Calu3 (cell line): ENCODE measurements at regions of chr5 and their contacts with region 1.

Region 1: GRCh38 chr5:149561848-149562247 is 10.6 kb upstream of the CSNK1A1 start:
- DNase-seq: peak; percentile 37
- H3K4me3 Mint-ChIP-seq: peak overlapping the region; percentile 63
- H3K27ac Mint-ChIP-seq: peak overlapping the region; percentile 87
- H3K4me1 Mint-ChIP-seq: peaks cover 36% of the 10 kb centered on the region
- H3K27me3 Mint-ChIP-seq: no peaks in the 10 kb centered on the region
- CTCF ChIP-seq: no peak

Region 2: DNA sequence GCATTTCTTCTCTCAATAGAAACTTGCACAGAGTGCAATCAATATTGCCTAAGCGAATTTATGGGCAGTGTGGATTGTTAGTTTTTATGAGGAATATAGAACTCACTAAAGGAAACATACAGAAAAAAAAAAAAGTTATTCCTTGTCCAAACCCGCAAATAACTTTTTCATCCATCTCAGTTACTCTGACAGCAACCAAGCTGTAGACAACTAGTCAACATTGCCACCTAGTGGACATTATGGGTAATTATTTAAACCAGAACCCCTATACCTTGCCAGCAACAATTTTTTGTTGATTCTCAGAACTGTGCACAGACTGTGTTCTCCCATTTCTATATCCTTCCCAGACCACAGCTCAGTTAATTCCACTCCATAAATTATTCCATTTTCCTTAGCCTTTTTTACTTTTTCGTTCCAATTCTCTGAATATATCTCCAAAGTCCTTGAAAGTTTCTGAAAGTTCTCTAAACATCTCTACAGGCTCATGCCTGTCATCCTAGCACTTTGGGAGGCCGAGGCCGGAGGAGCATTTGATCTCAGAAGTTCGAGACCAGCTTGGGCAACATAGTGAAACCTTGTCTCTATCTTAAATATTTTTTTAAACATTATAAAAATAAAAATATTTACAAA is 292.8 kb before region 1 on chr5:
- CTCF ChIA-PET with region 1: no interaction called
- intact Hi-C with region 1: loop called (anchors 10 kb)
- DNase-seq: peak; percentile 18
- H3K4me3 Mint-ChIP-seq: no peak overlapping the region
- H3K27ac Mint-ChIP-seq: no peak overlapping the region
- H3K4me1 Mint-ChIP-seq: peaks cover 28% of the 10 kb centered on the region
- H3K27me3 Mint-ChIP-seq: no peaks in the 10 kb centered on the region
- CTCF ChIP-seq: peak; percentile 72

Region 3: DNA sequence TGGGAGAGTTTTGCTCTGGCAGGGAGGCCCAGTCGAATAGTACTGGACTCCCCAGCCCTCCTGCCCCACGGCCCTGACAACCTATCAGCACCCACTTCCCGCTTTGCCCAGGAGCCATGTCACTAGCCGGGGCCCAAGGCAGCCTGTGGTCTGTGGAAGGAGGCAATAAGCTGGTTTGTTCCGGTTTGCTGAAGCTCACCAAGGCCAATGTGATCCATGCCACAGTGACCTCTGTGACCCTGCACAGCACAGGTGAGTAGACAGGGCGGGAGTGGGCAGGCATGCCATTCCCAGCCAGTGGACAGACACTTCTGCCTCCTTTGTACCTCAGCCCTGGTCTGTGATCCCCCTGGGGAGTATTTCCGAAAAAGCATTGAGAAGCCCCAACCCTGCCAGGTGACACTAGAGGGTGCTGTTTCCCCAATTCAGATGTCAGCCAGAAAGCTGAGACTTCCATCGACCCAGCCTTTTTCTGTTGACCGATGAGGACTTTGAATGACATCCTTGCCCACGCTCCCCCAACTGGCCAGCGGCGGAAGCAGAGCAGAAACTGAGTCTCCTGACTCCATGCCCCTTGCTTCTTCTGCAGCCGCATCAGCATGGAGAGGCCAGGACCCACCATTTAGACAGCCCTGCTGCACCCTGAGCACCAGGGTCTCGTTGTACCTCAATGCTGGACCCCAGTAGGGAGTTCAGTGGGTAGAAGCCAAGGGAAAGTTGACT is 194.4 kb before region 1 on chr5:
- CTCF ChIA-PET with region 1: interaction called, 9 read pairs
- intact Hi-C with region 1: loop called (anchors 1 kb)
- DNase-seq: peak; percentile 89
- H3K4me3 Mint-ChIP-seq: no peak overlapping the region
- H3K27ac Mint-ChIP-seq: no peak overlapping the region
- H3K4me1 Mint-ChIP-seq: peaks cover 8% of the 10 kb centered on the region
- H3K27me3 Mint-ChIP-seq: no peaks in the 10 kb centered on the region
- CTCF ChIP-seq: peak; percentile 90

Region 4: DNA sequence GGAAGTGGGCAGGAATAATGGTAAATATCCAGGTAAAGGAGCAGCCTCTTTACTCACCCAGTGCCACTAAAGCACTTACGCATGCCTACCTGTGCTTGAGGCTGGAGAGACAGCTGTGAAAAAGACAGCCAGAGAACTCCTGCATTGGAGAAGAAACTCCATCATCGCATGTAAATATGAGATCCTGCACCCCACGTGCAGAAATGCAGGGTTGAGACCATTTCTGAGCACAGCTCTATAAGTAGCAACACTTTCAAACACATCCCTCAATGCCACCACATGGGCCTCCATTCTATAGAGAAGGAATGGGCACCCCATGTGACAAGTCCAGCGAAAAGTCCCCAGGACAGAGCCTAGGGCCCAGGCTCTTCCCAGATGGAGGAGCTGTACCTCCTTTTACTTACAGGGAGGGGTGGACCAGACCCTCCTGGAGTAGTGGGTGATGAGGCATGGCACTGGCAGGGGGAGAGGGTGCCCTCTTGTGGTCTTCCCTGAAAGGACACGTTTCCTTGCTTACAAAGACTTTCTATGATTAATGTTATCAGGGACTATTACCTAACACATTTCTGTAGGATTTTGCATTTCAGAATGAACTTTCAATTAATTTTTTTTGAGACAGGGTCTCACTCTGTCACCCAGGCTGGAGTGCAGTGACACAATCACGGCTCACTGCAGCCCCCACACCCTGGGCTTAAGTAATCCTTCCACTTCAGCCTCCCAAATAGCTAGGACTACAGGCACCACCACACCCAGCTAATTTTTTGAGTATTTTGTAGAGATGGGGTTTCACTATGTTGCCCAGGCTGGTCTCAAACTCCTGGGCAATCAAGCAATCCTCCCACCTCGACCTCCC is 127.5 kb before region 1 on chr5:
- CTCF ChIA-PET with region 1: interaction called, 11 read pairs
- intact Hi-C with region 1: no loop called
- DNase-seq: peak; percentile 77
- H3K4me3 Mint-ChIP-seq: no peak overlapping the region
- H3K27ac Mint-ChIP-seq: no peak overlapping the region
- H3K4me1 Mint-ChIP-seq: peaks cover 27% of the 10 kb centered on the region
- H3K27me3 Mint-ChIP-seq: no peaks in the 10 kb centered on the region
- CTCF ChIP-seq: peak; percentile 93

Region 5: DNA sequence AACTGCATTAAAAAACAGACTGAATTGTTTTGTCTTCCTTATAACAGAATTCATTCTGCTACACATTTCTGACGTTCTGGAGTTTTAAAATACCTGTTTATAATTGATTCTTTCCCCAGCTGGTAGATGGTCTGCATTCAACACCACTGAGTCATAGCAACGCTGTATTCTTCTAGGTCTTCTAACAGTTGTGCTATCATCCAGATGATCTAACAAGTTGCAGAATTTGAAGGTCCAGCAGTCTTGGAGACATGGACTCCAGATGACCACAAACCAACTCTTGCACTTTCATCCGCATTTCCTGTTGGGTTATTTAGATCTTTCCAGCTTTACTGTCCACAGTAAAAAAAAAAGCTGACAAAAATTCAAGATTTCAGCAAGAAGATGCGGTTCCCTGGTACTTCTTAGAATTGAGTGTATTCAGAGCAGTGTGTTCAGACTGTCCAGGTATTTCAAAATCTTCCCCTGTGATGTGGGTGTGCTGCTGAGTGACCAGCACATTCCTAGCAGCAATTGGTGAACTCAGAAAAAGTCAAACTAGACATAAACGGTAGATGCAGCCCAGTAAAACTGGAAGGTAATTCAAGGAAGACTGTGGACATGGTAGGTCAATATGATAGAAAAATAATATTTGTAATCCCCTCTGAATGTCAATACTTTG is 60.8 kb before region 1 on chr5:
- CTCF ChIA-PET with region 1: no interaction called
- intact Hi-C with region 1: no loop called
- DNase-seq: no peak
- H3K4me3 Mint-ChIP-seq: no peak overlapping the region
- H3K27ac Mint-ChIP-seq: no peak overlapping the region
- H3K4me1 Mint-ChIP-seq: peaks cover 9% of the 10 kb centered on the region
- H3K27me3 Mint-ChIP-seq: no peaks in the 10 kb centered on the region
- CTCF ChIP-seq: no peak

Region 6: GRCh38 chr5:149618581-149619251 is 56.9 kb after region 1 on chr5:
- CTCF ChIA-PET with region 1: interaction called, 6 read pairs
- intact Hi-C with region 1: loop called (anchors 5 kb)
- DNase-seq: peak; percentile 67
- H3K4me3 Mint-ChIP-seq: no peak overlapping the region
- H3K27ac Mint-ChIP-seq: peak overlapping the region; percentile 22
- H3K4me1 Mint-ChIP-seq: peaks cover 36% of the 10 kb centered on the region
- H3K27me3 Mint-ChIP-seq: no peaks in the 10 kb centered on the region
- CTCF ChIP-seq: peak; percentile 75